ENCODE measurements at regions of chr1 and their contacts with region 1.

Region 1: GRCh38 chr1:65687428-65688214 is 105.1 kb upstream of the PDE4B start:
- DNase-seq: peak; percentile 77 to 98 (median 91)

Region 2: GRCh38 chr1:65059930-65060538 is 627.6 kb before region 1 on chr1:
- intact Hi-C with region 1: loop called (anchors 5 kb)
- DNase-seq: no peak

Region 3: GRCh38 chr1:65209005-65209885 is 478.4 kb before region 1 on chr1:
- intact Hi-C with region 1: loop called (anchors 10 kb)
- DNase-seq: peak in 13 of 42 donors; percentile 12 to 70 (median 27)

Region 4: DNA sequence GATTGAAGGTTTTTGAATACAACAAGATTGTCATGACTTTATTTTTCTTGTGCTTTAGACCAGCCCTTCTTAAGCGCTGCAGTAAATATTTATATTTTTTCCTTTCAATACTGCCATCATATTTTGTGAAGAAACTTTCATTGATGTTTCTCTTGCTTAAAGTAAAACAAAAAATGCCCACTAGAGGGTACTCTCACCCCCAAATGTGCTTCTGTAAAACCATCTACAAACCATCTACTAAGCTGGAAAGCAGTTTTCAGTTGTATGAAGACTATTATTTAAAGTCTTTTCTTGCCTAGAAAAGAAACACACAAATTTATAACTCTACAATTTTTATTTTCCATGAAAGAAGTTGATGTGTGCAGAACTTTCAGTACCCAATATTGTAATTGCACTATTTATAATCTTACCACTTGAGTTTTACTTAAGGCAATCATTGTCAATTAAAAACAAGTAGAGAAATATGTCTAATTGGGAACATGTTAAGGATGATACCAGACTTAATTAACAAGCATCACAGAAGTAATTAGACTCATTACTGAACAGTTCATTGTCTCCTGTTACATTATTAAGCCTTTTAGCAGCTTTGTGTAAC is 256.4 kb before region 1 on chr1:
- intact Hi-C with region 1: loop called (anchors 5 kb)
- DNase-seq: peak in 6 of 42 donors; percentile 16 to 57 (median 40)

Region 5: DNA sequence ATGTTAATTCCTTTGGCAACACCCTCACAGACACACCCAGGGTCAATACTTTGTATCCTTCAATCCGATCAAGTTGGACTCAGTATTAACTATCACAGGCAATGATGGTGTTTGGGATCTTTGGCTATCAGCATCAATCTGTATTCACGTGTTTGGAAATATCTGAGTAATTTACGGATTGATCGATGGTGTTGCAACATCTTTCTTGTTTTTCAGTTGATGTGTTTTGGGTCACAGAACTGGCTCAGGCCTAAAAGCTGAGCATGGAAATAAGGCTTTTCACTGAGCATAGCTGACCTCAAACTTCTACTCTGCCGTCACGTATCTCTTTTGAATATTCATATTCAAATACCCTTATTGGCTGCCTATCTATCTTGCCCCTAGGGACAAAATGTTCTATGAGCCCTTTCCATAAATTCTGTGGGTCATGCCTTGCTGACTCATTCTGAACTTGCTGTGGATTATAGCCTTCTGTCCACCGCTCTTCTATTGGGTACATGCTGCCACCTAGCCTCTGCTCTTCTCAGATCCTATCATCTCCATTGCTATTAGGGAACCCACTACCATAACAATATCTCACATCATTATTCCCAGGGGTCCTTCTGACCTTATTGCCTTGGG is 261.1 kb after region 1 on chr1:
- intact Hi-C with region 1: loop called (anchors 5 kb)
- DNase-seq: peak in 19 of 42 donors; percentile 11 to 72 (median 38)

Region 6: DNA sequence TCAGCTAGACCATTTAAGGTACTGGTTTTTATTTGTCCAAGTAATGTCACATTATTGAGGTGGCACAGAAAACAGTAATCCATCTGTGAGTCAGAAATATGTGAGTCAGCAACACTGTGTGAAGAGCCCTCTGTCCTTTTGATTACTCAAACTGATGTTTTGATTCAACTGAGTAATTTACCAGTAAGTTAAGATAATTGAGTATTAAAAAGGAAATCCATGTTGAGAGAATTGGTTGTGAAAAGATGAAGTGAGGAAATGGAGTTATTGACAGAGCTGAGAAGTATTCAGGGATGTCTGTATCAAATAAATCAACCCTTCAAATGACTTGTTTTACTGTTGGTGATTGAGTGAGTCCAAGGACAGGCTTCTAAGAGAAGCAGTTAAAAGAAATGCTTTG is 543.6 kb after region 1 on chr1:
- intact Hi-C with region 1: no loop called
- DNase-seq: no peak